HCT116 (cell line): ENCODE measurements at regions of chr14 and their contacts with region 1.

Region 1: DNA sequence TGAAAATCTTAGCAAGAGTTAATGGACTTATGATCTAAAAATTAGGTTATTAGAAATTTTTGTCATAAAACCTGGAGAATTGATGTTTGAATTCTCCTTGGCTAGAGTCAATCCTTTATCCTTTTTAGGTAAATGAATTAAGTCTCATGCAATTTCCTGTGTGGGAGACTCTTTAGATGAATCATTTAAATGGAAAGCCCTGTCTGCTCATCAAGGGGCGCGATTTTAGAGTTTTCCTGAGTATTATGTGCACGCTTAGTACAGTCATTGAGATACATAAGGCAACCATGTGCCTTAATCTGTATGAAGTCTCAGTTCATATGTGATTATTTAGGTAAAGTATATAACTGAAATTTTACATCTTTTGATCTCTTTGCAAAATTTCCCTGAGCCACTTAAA is 974.7 kb downstream of the NRXN3 start:
- DNase-seq: no peak
- ATAC-seq: no peak
- H3K4me3 ChIP-seq: no peak overlapping the region
- H3K27ac ChIP-seq: no peak overlapping the region
- H3K4me1 ChIP-seq: no peaks in the 10 kb centered on the region
- H3K27me3 ChIP-seq: no peaks in the 10 kb centered on the region
- CTCF ChIP-seq: no peak
- POLR2A ChIP-seq: no peak
- RAD21 ChIP-seq: no peak

Region 2: DNA sequence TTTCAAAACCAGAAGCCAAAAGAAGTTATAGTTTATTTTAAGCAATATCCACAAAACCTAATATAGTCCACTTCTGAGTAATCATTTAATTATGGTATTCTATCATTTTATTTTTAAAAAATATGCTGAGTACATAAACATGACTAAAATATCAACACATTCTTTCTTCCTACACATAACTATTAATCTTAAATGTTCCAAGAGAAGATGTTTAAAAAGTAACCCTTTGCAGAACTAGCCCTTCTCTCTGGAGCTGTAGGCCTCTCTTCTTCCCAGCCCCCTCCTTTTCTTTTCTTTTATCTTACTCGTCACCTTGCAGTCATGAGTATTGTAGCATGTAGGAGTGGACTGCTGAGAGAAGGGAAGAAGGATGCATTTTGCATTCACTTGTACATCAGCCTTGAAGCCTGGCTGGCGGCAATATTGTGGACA is 32.9 kb before region 1 on chr14:
- CTCF ChIA-PET with region 1: no interaction called
- POLR2A ChIA-PET with region 1: no interaction called
- RAD21 ChIA-PET with region 1: no interaction called
- intact Hi-C with region 1: loop called (anchors 1 kb)
- DNase-seq: no peak
- ATAC-seq: no peak
- H3K4me3 ChIP-seq: no peak overlapping the region
- H3K27ac ChIP-seq: no peak overlapping the region
- H3K4me1 ChIP-seq: no peaks in the 10 kb centered on the region
- H3K27me3 ChIP-seq: no peaks in the 10 kb centered on the region
- CTCF ChIP-seq: no peak
- POLR2A ChIP-seq: no peak
- RAD21 ChIP-seq: no peak